ENCODE measurements at regions of chr1 and their contacts with region 1.

Region 1: DNA sequence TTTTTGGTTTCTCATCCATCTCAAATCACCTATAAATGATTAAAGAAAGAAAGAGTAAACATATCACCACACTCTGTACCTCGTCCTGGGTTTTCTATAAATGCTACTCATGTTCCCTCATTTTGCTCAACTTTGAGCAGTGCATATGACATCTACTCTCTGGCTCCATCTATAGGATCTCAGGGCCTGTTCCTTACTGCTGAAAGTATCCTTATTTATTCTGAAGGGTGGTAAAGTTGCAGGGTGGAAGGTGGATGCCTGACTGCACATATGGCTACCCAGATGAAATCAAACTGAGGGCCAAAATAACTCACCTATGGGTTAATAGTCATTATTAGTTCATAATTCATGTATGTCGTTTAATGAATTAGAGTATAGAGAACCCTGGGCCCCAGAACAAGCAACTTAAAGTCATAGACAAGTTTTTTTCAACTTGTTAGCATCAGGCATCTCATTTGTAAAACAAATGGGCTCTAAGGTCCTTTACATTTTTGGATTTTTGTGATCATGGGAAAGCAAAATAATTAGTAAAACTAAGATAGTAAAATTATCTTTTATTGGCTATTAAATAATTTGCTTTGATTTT is 46.5 kb downstream of the NCF2 start:
- DNase-seq: peak in 7 of 9 donors; percentile 34 to 61 (median 48)
- ATAC-seq: peak; percentile 91
- H3K4me3 ChIP-seq: no peak overlapping the region
- H3K4me3 Mint-ChIP-seq: no peak overlapping the region
- H3K27ac ChIP-seq: no peak overlapping the region
- H3K27ac Mint-ChIP-seq: peak overlapping the region in 6 of 9 donors; percentile 1 to 50 (median 4)
- H3K4me1 ChIP-seq: no peaks in the 10 kb centered on the region
- H3K4me1 Mint-ChIP-seq: peaks cover 4 to 13% (median 10%) of the 10 kb centered on the region in 7 donors
- H3K27me3 ChIP-seq: no peaks in the 10 kb centered on the region
- H3K27me3 Mint-ChIP-seq: no peaks in the 10 kb centered on the region

Region 2: DNA sequence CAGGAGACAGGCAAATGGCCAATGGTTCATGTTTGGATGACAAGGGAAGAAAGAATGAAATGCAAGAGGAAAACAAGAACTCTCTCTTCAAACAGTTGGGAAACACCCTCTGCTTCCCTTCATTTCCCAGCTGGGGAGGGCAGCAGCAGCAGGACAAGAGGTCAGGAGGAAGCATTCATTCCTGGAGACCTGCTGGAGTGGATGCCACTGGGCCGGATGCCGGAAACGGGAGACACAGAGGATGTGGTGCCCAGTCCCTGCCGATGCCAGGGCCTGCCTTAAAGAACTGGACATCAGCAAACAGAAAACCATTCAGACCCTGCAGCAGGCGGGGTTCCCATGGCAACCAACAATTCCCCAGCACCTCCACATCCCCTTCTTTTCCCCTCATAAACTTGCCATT is 1379.9 kb before region 1 on chr1:
- CTCF ChIA-PET with region 1: no interaction called
- POLR2A ChIA-PET with region 1: no interaction called
- intact Hi-C with region 1: no loop called
- DNase-seq: no peak
- ATAC-seq: no peak
- H3K4me3 ChIP-seq: no peak overlapping the region
- H3K4me3 Mint-ChIP-seq: no peak overlapping the region
- H3K27ac ChIP-seq: no peak overlapping the region
- H3K27ac Mint-ChIP-seq: peak overlapping the region in 1 of 9 donors; percentile 65
- H3K4me1 ChIP-seq: no peaks in the 10 kb centered on the region
- H3K4me1 Mint-ChIP-seq: no peaks in the 10 kb centered on the region
- H3K27me3 ChIP-seq: no peaks in the 10 kb centered on the region
- H3K27me3 Mint-ChIP-seq: peaks cover 0 to 9% (median 4%) of the 10 kb centered on the region in 5 donors

Region 3: GRCh38 chr1:182877842-182878241 is 665.9 kb before region 1 on chr1:
- CTCF ChIA-PET with region 1: no interaction called
- POLR2A ChIA-PET with region 1: no interaction called
- intact Hi-C with region 1: loop called in 1 of 2 experiments (anchors 10 kb)
- DNase-seq: peak in 1 of 9 donors; percentile 30
- ATAC-seq: no peak
- H3K4me3 ChIP-seq: no peak overlapping the region
- H3K4me3 Mint-ChIP-seq: no peak overlapping the region
- H3K27ac ChIP-seq: no peak overlapping the region
- H3K27ac Mint-ChIP-seq: peak overlapping the region in 3 of 9 donors; percentile 21 to 54 (median 50)
- H3K4me1 ChIP-seq: no peaks in the 10 kb centered on the region
- H3K4me1 Mint-ChIP-seq: peaks cover 3 to 21% (median 6%) of the 10 kb centered on the region in 7 donors
- H3K27me3 ChIP-seq: no peaks in the 10 kb centered on the region
- H3K27me3 Mint-ChIP-seq: no peaks in the 10 kb centered on the region

Region 4: GRCh38 chr1:183506561-183506960 is 37.2 kb before region 1 on chr1:
- CTCF ChIA-PET with region 1: no interaction called
- POLR2A ChIA-PET with region 1: no interaction called
- intact Hi-C with region 1: loop called in 1 of 2 experiments (anchors 5 kb)
- DNase-seq: no peak
- ATAC-seq: no peak
- H3K4me3 ChIP-seq: no peak overlapping the region
- H3K4me3 Mint-ChIP-seq: no peak overlapping the region
- H3K27ac ChIP-seq: no peak overlapping the region
- H3K27ac Mint-ChIP-seq: no peak overlapping the region
- H3K4me1 ChIP-seq: peaks cover 0 to 20% of the 10 kb centered on the region in 2 donors
- H3K4me1 Mint-ChIP-seq: peaks cover 7 to 47% (median 25%) of the 10 kb centered on the region in 7 donors
- H3K27me3 ChIP-seq: no peaks in the 10 kb centered on the region
- H3K27me3 Mint-ChIP-seq: no peaks in the 10 kb centered on the region

Region 5: DNA sequence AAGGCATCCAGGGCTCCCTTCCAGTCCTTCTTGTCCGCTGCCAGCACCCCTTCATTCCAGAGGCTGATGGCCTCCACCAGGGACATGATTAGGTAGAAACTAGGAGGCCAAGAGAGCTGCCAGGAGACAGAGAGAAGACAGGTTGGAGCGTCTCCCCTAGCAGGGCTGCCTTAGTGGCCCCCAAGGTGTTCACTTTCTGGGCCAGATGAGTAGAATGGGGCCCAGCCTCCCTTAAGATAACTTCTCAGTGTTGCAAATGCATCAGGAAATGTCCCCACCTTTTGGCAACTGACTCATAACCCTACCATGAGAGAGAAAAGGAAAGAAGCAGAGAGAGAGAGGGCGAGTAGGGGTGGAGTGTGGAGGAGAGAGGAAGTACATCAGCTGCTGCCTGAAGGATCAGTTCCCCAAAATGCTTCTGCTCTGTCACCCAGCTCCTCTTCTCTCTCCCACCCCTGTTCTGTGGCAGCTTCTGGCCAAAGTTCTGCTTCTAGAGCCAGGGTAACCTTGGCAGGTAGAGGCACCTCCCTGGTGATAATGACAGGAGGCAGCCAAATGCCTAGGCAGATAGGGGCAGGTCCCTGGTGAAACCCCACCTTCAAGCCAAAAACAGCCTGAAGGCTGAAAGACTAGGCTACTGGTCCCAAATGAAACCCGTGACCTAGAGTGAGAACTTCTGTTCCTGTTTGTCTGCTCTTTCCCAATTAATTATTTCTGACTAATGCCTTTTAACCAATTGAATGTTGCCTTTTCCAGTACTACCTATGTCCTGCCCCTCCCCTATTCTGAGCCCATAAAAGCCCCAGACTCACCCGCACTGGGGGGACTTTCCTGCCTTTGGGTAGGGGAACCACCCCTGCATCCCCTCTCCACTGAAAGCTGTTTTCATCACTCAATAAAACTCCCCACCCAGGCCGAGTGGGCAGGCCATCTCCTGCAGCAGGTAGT is 46.8 kb after region 1 on chr1 and contains the start of gene NCF2:
- CTCF ChIA-PET with region 1: no interaction called
- POLR2A ChIA-PET with region 1: no interaction called
- intact Hi-C with region 1: loop called in 1 of 2 experiments (anchors 2 kb)
- DNase-seq: peak in 1 of 9 donors; percentile 46
- ATAC-seq: peak; percentile 90
- H3K4me3 ChIP-seq: no peak within 1 kb of the TSS
- H3K4me3 Mint-ChIP-seq: peak within 1 kb of the TSS in 5 of 10 donors; percentile 20 to 81 (median 25)
- H3K27ac ChIP-seq: no peak within 1 kb of the TSS
- H3K27ac Mint-ChIP-seq: peak within 1 kb of the TSS in 4 of 9 donors; percentile 36 to 87 (median 64)
- H3K4me1 ChIP-seq: peaks cover 3 to 9% of the 10 kb centered on the region in 2 donors
- H3K4me1 Mint-ChIP-seq: peaks cover 0 to 44% (median 19%) of the 10 kb centered on the region in 7 donors
- H3K27me3 ChIP-seq: no peaks in the 10 kb centered on the region
- H3K27me3 Mint-ChIP-seq: peaks cover 0 to 5% (median 0%) of the 10 kb centered on the region in 5 donors
- total RNA-seq, gene NCF2: 2.2 to 145 (median 15.2) TPM

Region 6: DNA sequence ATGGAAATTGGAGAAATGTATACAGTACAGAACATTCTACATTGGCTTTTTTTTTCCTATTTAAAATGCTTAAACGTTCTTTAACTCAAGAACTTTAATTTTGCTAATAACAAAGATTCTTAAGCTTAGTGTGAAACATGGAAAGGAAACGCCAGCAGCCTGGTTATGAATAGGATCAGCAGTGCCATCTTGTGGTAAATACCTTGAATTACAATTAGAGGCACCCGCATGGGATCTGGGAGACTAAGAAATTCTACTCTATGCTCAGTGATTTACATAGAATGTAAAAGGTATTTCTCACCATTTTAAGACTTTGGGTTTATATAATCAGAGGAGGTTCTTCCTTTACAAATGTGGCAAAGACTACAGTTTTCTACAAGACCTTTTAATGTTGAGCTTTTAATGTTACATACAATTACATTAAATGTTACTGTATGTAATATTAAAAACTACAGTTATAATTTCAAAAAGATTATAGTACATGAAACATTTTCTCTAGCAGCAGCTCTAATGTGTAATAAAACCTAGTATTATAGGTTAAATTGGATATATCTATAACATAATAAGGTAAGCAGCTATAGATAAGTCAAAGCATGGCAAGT is 141.5 kb after region 1 on chr1:
- CTCF ChIA-PET with region 1: no interaction called
- POLR2A ChIA-PET with region 1: no interaction called
- intact Hi-C with region 1: loop called in 1 of 2 experiments (anchors 1 kb)
- DNase-seq: peak in 7 of 9 donors; percentile 20 to 63 (median 54)
- ATAC-seq: peak; percentile 86
- H3K4me3 ChIP-seq: no peak overlapping the region
- H3K4me3 Mint-ChIP-seq: no peak overlapping the region
- H3K27ac ChIP-seq: no peak overlapping the region
- H3K27ac Mint-ChIP-seq: no peak overlapping the region
- H3K4me1 ChIP-seq: no peaks in the 10 kb centered on the region
- H3K4me1 Mint-ChIP-seq: peaks cover 0 to 4% (median 0%) of the 10 kb centered on the region in 7 donors
- H3K27me3 ChIP-seq: no peaks in the 10 kb centered on the region
- H3K27me3 Mint-ChIP-seq: peaks cover 0 to 30% (median 0%) of the 10 kb centered on the region in 5 donors